PC-3 (cell line): ENCODE measurements at regions of chr3 and their contacts with region 1.

Region 1: GRCh38 chr3:137013955-137014688 is 56.3 kb downstream of the IL20RB start:
- DNase-seq: peak; percentile 89
- ATAC-seq: peak; percentile 92
- H3K4me3 ChIP-seq: peak overlapping the region; percentile 72
- H3K27ac ChIP-seq: no peak overlapping the region
- H3K4me1 ChIP-seq: peaks cover 5% of the 10 kb centered on the region; the same call in 1 of the 2 replicates
- H3K27me3 ChIP-seq: no peaks in the 10 kb centered on the region
- CTCF ChIP-seq: peak; percentile 77

Region 2: GRCh38 chr3:136390574-136390973 is 623.5 kb before region 1 on chr3:
- CTCF ChIA-PET with region 1: no interaction called
- POLR2A ChIA-PET with region 1: no interaction called
- intact Hi-C with region 1: loop called (anchors 5 kb)
- DNase-seq: no peak
- ATAC-seq: no peak
- H3K4me3 ChIP-seq: no peak overlapping the region
- H3K27ac ChIP-seq: no peak overlapping the region
- H3K4me1 ChIP-seq: no peaks in the 10 kb centered on the region
- H3K27me3 ChIP-seq: no peaks in the 10 kb centered on the region
- CTCF ChIP-seq: no peak

Region 3: DNA sequence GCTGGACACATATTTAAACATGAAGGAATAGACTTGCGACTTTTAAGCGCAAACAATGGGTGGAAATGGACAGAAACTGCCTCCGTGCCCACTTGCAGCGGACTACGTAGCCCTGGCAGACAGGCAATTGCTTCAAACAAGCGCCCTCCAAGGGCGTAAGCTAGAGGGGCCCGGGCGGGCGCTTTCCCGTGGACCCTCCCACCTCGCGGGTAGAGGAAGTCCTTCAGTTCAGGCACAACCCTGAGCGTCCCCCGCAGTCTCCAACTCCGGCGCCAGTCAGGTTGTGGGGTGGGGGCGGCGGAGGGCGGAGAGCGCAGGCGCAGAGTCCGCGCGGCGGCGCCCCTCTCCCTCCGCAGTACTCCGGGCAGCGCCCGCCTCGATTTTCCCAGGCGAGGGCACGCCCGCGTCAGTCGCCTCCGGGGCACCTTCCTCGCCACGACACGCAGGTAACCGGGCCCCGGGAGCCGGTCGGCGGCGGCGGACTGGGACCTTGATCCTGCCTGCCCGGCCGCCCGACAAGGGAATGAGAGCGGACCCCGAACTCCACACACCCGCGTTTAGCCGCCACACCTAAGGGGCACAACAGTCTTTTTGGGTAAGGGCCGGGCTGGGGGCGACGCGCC is 195.2 kb before region 1 on chr3 and contains the start of gene SLC35G2:
- CTCF ChIA-PET with region 1: no interaction called
- POLR2A ChIA-PET with region 1: no interaction called
- intact Hi-C with region 1: loop called (anchors 5 kb)
- DNase-seq: no peak
- ATAC-seq: peak; percentile 42
- H3K4me3 ChIP-seq: peak within 1 kb of the TSS; percentile 70
- H3K27ac ChIP-seq: peak within 1 kb of the TSS; percentile 36
- H3K4me1 ChIP-seq: peaks cover 6% of the 10 kb centered on the region; the same call in 1 of the 2 replicates
- H3K27me3 ChIP-seq: no peaks in the 10 kb centered on the region
- CTCF ChIP-seq: no peak
- total RNA-seq, gene SLC35G2: 1.8 and 3.7 TPM in 2 replicates

Region 4: GRCh38 chr3:136949708-136950107 is 64.4 kb before region 1 on chr3:
- CTCF ChIA-PET with region 1: interaction called, 3 read pairs
- POLR2A ChIA-PET with region 1: no interaction called
- intact Hi-C with region 1: loop called (anchors 1 kb)
- DNase-seq: no peak
- ATAC-seq: no peak
- H3K4me3 ChIP-seq: no peak overlapping the region
- H3K27ac ChIP-seq: no peak overlapping the region
- H3K4me1 ChIP-seq: no peaks in the 10 kb centered on the region
- H3K27me3 ChIP-seq: no peaks in the 10 kb centered on the region
- CTCF ChIP-seq: peak; percentile 32; the same call in 1 of the 2 replicates